H1 (cell line): ENCODE measurements at regions of chr6 and their contacts with region 1.

Region 1: GRCh38 chr6:108872141-108872557 is 23.9 kb downstream of the ARMC2 start:
- DNase-seq: no peak
- H3K4me3 ChIP-seq: no peak overlapping the region
- H3K27ac ChIP-seq: no peak overlapping the region
- H3K4me1 ChIP-seq: peaks cover 0 to 10% (median 1%) of the 10 kb centered on the region in 4 experiments; a peak in 5 of 7 replicates
- H3K27me3 ChIP-seq: no peaks in the 10 kb centered on the region
- CTCF ChIP-seq: no peak
- EP300 ChIP-seq: no peak
- POLR2A ChIP-seq: no peak
- RAD21 ChIP-seq: no peak

Region 2: GRCh38 chr6:108820006-108820405 is 52.1 kb before region 1 on chr6:
- CTCF ChIA-PET with region 1: no interaction called
- POLR2A ChIA-PET with region 1: no interaction called
- DNase-seq: no peak
- H3K4me3 ChIP-seq: no peak overlapping the region
- H3K27ac ChIP-seq: no peak overlapping the region
- H3K4me1 ChIP-seq: no peaks in the 10 kb centered on the region
- H3K27me3 ChIP-seq: no peaks in the 10 kb centered on the region
- CTCF ChIP-seq: no peak
- EP300 ChIP-seq: no peak
- POLR2A ChIP-seq: no peak
- RAD21 ChIP-seq: no peak

Region 3: GRCh38 chr6:108848116-108848868 is 23.9 kb before region 1 on chr6 and contains the start of gene ARMC2:
- CTCF ChIA-PET with region 1: interaction called, 11 read pairs
- POLR2A ChIA-PET with region 1: interaction called, 3 read pairs
- DNase-seq: peak; percentile 73 to 98
- H3K4me3 ChIP-seq: peak within 1 kb of the TSS; percentile 76 to 88 (median 81)
- H3K27ac ChIP-seq: 0 out of 2 replicates have a peak within 1 kb of the TSS, but pooled peaks have one; percentile 6
- H3K4me1 ChIP-seq: peaks cover 0 to 8% (median 0%) of the 10 kb centered on the region in 4 experiments; a peak in 2 of 7 replicates
- H3K27me3 ChIP-seq: no peaks in the 10 kb centered on the region
- CTCF ChIP-seq: no peak
- EP300 ChIP-seq: no peak
- POLR2A ChIP-seq: no peak
- RAD21 ChIP-seq: no peak
- total RNA-seq, gene ARMC2: 4.3 and 4.4 TPM in 2 replicates

Region 4: GRCh38 chr6:108883172-108883571 is 11.0 kb after region 1 on chr6:
- CTCF ChIA-PET with region 1: interaction called, 17 read pairs
- POLR2A ChIA-PET with region 1: interaction called, 3 read pairs
- DNase-seq: no peak
- H3K4me3 ChIP-seq: no peak overlapping the region
- H3K27ac ChIP-seq: no peak overlapping the region
- H3K4me1 ChIP-seq: no peaks in the 10 kb centered on the region
- H3K27me3 ChIP-seq: no peaks in the 10 kb centered on the region
- CTCF ChIP-seq: no peak
- EP300 ChIP-seq: no peak
- POLR2A ChIP-seq: no peak
- RAD21 ChIP-seq: no peak